CD14-positive monocyte (primary cell): ENCODE measurements at regions of chr12 and their contacts with region 1.

Region 1: DNA sequence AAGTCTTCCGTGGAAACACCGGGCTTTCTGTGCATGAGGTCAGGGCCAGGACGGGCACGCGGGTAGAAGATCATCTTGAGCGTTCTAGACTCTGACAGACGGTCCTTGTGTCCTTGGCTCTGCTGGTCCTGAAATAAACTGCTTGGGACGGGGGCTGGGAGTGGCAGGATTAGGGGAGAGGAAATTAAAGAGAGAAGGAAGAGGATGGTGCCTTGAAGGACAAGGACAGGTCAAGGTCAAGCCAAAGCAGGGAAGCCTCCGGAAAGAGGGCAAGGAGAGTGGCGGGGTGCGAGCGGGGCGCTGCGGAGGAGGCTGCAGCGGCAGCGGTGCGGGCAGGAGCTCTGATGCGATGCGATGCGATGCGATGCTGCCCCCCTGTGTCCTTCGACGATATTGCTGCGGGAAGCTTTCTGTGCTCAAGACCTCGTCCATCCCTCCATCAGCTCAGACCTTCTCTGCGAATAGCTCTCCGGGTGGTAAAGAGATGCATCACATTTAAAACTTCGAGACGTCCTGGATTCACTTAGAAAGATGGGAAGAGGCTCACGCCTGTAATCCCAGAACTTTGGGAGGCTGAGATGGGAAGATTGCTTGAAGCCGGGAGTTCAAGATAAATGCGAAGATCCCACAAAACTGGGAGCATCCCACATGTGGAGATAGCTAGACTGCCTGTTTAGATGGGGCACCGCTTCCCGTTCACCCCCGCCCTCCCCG is 110.1 kb upstream of the TMEM132D start:
- DNase-seq: peak in 1 of 3 donors; percentile 6
- H3K4me3 ChIP-seq: no peak overlapping the region
- H3K4me3 Mint-ChIP-seq: no peak overlapping the region
- H3K27ac ChIP-seq: no peak overlapping the region
- H3K27ac Mint-ChIP-seq: no peak overlapping the region
- H3K4me1 ChIP-seq: no peaks in the 10 kb centered on the region
- H3K4me1 Mint-ChIP-seq: no peaks in the 10 kb centered on the region
- H3K27me3 ChIP-seq: no peaks in the 10 kb centered on the region
- H3K27me3 Mint-ChIP-seq: peaks cover 0 to 7% (median 4%) of the 10 kb centered on the region in 3 donors
- CTCF ChIP-seq: peak; percentile 67

Region 2: GRCh38 chr12:128644664-128645296 is 1369.1 kb before region 1 on chr12:
- intact Hi-C with region 1: loop called in 1 of 2 experiments (anchors 10 kb)
- DNase-seq: peak in 1 of 3 donors; percentile 3
- H3K4me3 ChIP-seq: no peak overlapping the region
- H3K4me3 Mint-ChIP-seq: no peak overlapping the region
- H3K27ac ChIP-seq: no peak overlapping the region
- H3K27ac Mint-ChIP-seq: no peak overlapping the region
- H3K4me1 ChIP-seq: no peaks in the 10 kb centered on the region
- H3K4me1 Mint-ChIP-seq: no peaks in the 10 kb centered on the region
- H3K27me3 ChIP-seq: no peaks in the 10 kb centered on the region
- H3K27me3 Mint-ChIP-seq: peaks cover 0 to 4% (median 1%) of the 10 kb centered on the region in 3 donors
- CTCF ChIP-seq: peak; percentile 89

Region 3: DNA sequence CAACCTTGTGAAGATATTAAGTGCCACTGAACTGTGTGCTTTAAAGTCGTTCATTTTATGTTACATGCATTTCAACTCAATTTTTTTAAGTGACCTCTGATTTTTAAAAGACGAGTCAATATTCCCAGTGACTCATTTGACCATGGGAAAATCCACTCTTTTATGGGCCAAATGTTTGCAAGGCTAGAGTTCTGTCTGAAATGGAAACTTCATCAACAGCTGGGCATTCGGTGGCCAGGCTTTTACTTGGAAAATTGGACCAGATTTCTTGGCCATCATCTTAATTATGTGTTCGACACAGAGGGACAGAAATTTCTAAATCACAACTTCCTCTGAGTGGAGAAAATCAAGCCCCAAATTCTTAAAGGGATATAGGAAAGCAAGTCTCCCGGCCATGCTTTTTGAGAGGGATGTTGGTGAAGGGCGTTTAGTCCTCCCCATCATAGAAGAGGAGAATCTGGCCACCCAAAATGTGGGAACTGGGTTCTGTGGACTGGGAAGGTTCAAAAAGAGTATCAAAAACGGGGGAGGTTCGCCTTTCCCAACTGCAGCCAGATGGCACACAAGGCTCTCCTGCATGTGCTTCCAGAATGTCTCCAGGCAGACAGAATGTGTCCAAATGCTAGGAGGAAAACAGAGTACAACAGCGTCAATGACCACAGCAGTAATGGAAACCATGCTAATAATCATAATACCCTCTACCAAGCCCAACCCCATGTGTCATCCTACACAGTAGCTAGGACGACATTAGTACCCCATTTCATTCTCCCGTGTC is 107.5 kb after region 1 on chr12:
- intact Hi-C with region 1: no loop called
- DNase-seq: no peak
- H3K4me3 ChIP-seq: no peak overlapping the region
- H3K4me3 Mint-ChIP-seq: no peak overlapping the region
- H3K27ac ChIP-seq: no peak overlapping the region
- H3K27ac Mint-ChIP-seq: no peak overlapping the region
- H3K4me1 ChIP-seq: no peaks in the 10 kb centered on the region
- H3K4me1 Mint-ChIP-seq: no peaks in the 10 kb centered on the region
- H3K27me3 ChIP-seq: no peaks in the 10 kb centered on the region
- H3K27me3 Mint-ChIP-seq: peaks cover 3 to 8% (median 8%) of the 10 kb centered on the region in 3 donors
- CTCF ChIP-seq: no peak